Endothelial cell of umbilical vein (primary cell): ENCODE measurements at regions of chr5 and their contacts with region 1.

Region 1: DNA sequence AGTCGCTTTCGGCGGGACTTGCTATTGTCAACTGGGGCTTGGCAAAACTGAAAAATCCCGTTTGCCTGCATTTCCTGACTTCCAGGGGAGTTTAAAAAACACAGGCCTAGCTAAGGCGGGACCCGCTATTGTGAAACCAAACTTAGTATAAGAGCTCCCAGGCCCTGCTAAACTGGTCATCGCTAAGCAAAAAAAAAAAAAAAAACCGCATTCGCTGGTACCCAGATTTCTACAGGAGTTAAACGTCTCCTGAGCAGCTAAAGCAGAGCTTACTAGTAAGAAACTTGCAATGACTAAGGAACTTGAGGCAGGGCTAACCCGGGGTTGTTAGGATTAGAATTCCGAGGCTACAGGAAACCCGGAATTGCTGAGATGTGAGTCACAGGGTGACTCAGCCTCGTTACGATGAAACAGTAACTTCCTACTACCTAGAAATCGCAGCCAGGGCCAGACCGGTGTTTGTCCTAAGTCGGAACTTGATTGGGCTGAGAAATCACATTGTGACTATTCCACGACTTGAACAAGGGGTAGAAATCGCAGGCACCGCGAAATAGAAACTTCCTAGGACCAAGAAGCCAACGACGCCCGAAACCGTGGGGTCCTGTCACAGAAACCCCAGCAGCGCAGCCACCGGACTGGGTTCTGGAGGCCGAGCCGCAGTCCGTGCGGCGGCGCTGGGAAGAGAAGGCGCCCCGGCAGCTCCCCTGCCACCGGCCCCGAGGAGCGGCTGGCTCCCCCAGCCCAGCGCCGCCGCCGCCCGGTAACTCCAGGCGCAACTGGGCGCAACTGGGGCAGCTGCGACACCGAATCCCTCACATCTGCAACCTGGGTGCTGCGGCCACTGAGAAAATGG is 89.5 kb downstream of the ANXA2R start:
- DNase-seq: peak; percentile 98
- H3K4me3 ChIP-seq: peak overlapping the region; percentile 11 to 55 (median 49)
- H3K27ac ChIP-seq: peak overlapping the region; percentile 99
- H3K4me1 ChIP-seq: peaks cover 17% of the 10 kb centered on the region
- H3K27me3 ChIP-seq: no peaks in the 10 kb centered on the region
- CTCF ChIP-seq: no peak
- POLR2A ChIP-seq: peak; percentile 86

Region 2: GRCh38 chr5:42898760-42899159 is 51.9 kb before region 1 on chr5:
- CTCF ChIA-PET with region 1: no interaction called
- POLR2A ChIA-PET with region 1: no interaction called
- dilution Hi-C with region 1: no loop called
- intact Hi-C with region 1: no loop called
- DNase-seq: no peak
- H3K4me3 ChIP-seq: no peak overlapping the region
- H3K27ac ChIP-seq: no peak overlapping the region
- H3K4me1 ChIP-seq: no peaks in the 10 kb centered on the region
- H3K27me3 ChIP-seq: peaks cover 8 to 9% of the 10 kb centered on the region in 2 experiments
- CTCF ChIP-seq: no peak
- POLR2A ChIP-seq: no peak

Region 3: GRCh38 chr5:42962124-42962523 is 11.5 kb after region 1 on chr5:
- CTCF ChIA-PET with region 1: no interaction called
- POLR2A ChIA-PET with region 1: no interaction called
- dilution Hi-C with region 1: no loop called
- intact Hi-C with region 1: no loop called
- DNase-seq: no peak
- H3K4me3 ChIP-seq: no peak overlapping the region
- H3K27ac ChIP-seq: no peak overlapping the region
- H3K4me1 ChIP-seq: no peaks in the 10 kb centered on the region
- H3K27me3 ChIP-seq: no peaks in the 10 kb centered on the region
- CTCF ChIP-seq: no peak
- POLR2A ChIP-seq: no peak

Region 4: DNA sequence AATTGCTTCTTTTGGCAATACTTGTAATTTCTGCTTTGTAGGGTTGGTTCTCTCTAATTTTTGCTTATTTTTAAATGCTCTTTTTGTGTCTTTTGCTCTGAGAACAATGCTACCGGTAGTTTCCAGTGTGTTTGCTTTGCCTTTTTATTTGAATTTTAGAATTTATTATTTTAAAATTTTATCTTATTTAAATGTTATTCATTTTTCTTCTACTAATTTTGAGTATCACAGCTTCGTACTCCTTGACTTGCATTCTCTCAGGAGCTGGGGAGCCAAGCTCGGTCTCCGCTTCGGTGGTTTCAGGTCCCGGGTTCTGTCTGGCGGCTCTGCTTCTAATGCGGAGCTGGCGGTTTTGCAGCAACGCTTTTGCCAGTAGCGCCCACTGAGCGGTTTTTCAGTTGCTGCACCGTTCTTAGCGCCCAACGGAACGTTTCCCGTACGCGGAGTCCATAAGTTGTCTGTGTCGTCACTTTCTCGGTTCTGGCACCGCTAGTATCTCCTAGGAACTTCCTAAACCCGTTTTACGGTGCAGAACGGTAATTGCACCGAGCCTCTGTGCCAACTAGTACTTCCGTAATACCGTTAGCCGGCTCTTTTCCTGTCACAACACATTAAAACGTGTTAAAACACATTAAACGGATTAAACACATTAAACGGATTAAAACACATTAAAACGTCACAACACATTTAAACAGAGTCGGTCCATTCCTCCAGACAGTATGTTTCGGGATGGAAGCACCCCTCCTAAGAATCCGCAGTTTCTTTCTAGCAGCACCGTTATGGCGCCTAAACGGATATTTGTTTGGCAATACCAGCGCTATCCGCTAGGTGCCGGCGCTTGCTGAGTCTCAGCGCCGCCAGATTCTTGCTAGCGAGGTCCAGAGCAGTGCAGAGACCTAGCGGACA is 43.8 kb after region 1 on chr5:
- CTCF ChIA-PET with region 1: interaction called, 61 read pairs
- POLR2A ChIA-PET with region 1: interaction called, 22 read pairs
- dilution Hi-C with region 1: no loop called
- intact Hi-C with region 1: loop called (anchors 1 kb)
- DNase-seq: peak; percentile 96
- H3K4me3 ChIP-seq: peak overlapping the region; percentile 59 to 94 (median 61)
- H3K27ac ChIP-seq: peak overlapping the region; percentile 98
- H3K4me1 ChIP-seq: peaks cover 30% of the 10 kb centered on the region
- H3K27me3 ChIP-seq: no peaks in the 10 kb centered on the region
- CTCF ChIP-seq: peak; percentile 85 to 86
- POLR2A ChIP-seq: peak; percentile 52

Region 5: GRCh38 chr5:43008369-43009153 is 57.9 kb after region 1 on chr5:
- CTCF ChIA-PET with region 1: interaction called, 7 read pairs
- POLR2A ChIA-PET with region 1: interaction called, 6 read pairs
- dilution Hi-C with region 1: no loop called
- intact Hi-C with region 1: loop called (anchors 1 kb)
- DNase-seq: peak; percentile 96
- H3K4me3 ChIP-seq: peak overlapping the region; percentile 45 to 77 (median 75)
- H3K27ac ChIP-seq: peak overlapping the region; percentile 90
- H3K4me1 ChIP-seq: peaks cover 26% of the 10 kb centered on the region
- H3K27me3 ChIP-seq: no peaks in the 10 kb centered on the region
- CTCF ChIP-seq: peak in 1 of 2 donors; percentile 28
- POLR2A ChIP-seq: peak; percentile 66

Region 6: DNA sequence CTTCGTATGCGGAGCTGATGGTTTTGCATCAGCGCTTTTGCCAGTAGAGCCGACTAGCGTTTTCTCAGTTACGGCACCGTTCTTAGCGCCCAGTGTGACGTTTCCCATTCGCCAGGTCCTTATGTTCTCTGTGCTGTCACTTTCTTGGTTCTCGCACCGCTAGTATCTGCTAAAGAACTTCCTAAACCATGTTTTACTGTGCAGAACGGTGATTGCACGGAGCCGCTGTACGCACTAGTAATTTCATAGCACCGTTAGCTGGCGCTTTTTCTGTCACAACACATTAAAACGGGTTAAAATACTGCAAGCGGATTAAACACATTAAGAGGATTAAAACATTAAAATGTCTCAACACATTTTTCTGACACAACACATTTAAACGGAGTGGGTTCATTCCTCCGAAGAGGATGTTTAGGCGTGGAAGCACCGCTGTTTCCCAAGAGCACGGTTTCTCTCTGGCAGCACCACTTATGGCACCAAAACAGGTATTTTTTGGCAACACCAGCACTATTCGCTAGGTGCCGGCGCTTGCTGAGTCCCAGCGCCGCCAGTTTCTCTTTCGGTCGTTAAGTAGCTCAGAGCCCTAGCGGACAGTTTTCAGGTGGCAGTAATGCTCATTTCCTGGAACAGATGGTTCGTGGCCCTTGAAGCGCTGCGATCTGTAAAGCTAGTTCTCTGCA is 69.1 kb after region 1 on chr5:
- CTCF ChIA-PET with region 1: interaction called, 25 read pairs
- POLR2A ChIA-PET with region 1: interaction called, 10 read pairs
- dilution Hi-C with region 1: no loop called
- intact Hi-C with region 1: loop called (anchors 1 kb)
- DNase-seq: peak; percentile 87
- H3K4me3 ChIP-seq: peak overlapping the region; percentile 36 to 83 (median 65)
- H3K27ac ChIP-seq: peak overlapping the region; percentile 93
- H3K4me1 ChIP-seq: peaks cover 19% of the 10 kb centered on the region
- H3K27me3 ChIP-seq: no peaks in the 10 kb centered on the region
- CTCF ChIP-seq: peak; percentile 51 to 61
- POLR2A ChIP-seq: no peak

Region 7: GRCh38 chr5:43040287-43041098 is 89.8 kb after region 1 on chr5 and contains the start of gene ANXA2R:
- CTCF ChIA-PET with region 1: interaction called, 10 read pairs
- POLR2A ChIA-PET with region 1: interaction called, 9 read pairs
- dilution Hi-C with region 1: no loop called
- intact Hi-C with region 1: loop called (anchors 1 kb)
- DNase-seq: peak; percentile 97
- H3K4me3 ChIP-seq: peak within 1 kb of the TSS; percentile 51 to 87 (median 54)
- H3K27ac ChIP-seq: peak within 1 kb of the TSS; percentile 77
- H3K4me1 ChIP-seq: peaks cover 30% of the 10 kb centered on the region
- H3K27me3 ChIP-seq: no peaks in the 10 kb centered on the region
- CTCF ChIP-seq: peak; percentile 81 to 86
- POLR2A ChIP-seq: no peak
- total RNA-seq, gene ANXA2R: 6.6 and 8.1 TPM in 2 replicates

Region 8: DNA sequence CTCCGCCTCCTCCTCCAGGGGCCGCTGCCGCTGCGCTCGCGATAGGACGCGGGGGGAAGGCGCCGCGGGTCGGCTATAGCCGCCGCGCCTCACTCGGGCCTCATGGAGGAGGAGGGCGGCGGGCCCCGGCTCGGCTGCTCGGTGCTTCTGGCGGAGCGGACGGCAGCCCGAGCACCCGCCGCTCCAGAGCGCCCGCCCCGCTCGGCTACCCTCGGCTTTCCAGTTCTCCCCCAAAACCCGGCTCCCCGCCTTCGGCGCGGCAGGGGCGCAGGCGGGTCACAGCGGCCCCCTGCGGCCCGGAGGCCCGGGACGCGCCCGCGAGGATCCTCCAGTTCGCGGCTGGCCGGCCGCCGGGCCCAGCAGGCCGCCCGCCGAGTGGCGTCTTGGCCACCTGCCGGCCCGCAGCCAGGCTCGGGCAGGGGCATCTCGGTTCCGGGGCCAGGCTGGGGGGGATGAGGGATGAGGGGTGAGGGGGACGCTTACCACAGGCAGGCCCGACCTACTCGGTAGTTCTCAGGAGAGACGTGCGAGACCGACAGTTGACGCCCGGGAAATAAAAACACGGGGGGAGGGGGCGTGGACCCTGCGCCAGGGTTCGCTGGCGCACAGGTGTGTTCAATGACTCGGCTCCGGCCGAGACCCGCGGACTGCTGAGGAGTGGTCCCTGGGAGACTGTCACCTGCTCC is 606.3 kb after region 1 on chr5 and contains the start of gene PAIP1:
- CTCF ChIA-PET with region 1: no interaction called
- POLR2A ChIA-PET with region 1: no interaction called
- dilution Hi-C with region 1: no loop called
- intact Hi-C with region 1: loop called (anchors 1 kb)
- DNase-seq: peak; percentile 86
- H3K4me3 ChIP-seq: peak within 1 kb of the TSS; percentile 91 to 98 (median 96)
- H3K27ac ChIP-seq: peak within 1 kb of the TSS; percentile 73
- H3K4me1 ChIP-seq: peaks cover 25% of the 10 kb centered on the region
- H3K27me3 ChIP-seq: peaks cover 1 to 3% of the 10 kb centered on the region in 2 experiments
- CTCF ChIP-seq: peak; percentile 44 to 71
- POLR2A ChIP-seq: no peak
- total RNA-seq, gene PAIP1: 81.6 and 90.1 TPM in 2 replicates